Caco-2 (cell line): ENCODE measurements at regions of chr6 and their contacts with region 1.

Region 1: DNA sequence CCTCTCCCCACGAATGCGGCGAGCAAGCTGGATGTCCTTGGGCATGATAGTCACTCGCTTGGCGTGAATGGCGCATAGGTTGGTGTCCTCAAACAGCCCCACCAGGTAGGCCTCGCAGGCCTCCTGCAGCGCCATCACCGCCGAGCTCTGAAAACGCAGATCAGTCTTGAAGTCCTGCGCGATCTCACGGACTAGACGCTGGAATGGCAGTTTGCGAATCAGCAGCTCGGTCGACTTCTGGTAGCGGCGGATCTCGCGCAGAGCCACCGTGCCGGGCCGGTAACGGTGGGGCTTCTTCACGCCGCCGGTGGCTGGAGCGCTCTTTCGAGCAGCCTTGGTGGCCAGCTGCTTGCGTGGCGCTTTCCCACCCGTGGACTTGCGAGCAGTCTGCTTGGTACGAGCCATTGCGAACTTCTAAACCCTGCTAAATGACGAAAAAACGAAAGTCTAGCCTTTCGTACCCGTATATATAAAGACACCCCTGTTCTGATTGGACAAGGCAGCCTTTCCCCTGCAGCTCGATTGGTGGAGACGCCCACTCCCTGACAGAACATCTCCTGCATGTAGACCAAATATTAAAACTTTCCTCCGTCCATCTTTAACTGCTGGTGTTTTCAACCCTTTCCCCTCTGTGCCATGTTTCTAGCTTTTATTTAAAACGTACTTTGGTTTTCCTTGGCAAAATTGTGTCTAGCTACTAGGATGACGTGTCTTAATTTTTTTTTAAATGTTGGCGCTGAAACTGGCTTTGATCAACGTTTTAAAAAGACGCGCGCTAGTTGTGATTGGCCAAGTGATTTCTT is 109.8 kb downstream of the HFE start:
- DNase-seq: peak; percentile 89 to 92
- H3K4me3 ChIP-seq: peak overlapping the region; percentile 63
- H3K4me3 Mint-ChIP-seq: peak overlapping the region; percentile 87
- H3K27ac Mint-ChIP-seq: peak overlapping the region; percentile 99
- H3K4me1 ChIP-seq: peaks cover 4% of the 10 kb centered on the region; the same call in 1 of the 2 replicates
- H3K4me1 Mint-ChIP-seq: peaks cover 27% of the 10 kb centered on the region
- H3K27me3 ChIP-seq: no peaks in the 10 kb centered on the region
- H3K27me3 Mint-ChIP-seq: peaks cover 3% of the 10 kb centered on the region
- CTCF ChIP-seq: no peak

Region 2: GRCh38 chr6:26025894-26026832 is 170.9 kb before region 1 on chr6:
- CTCF ChIA-PET with region 1: interaction called, 3 read pairs
- POLR2A ChIA-PET with region 1: interaction called, 15 read pairs
- intact Hi-C with region 1: loop called (anchors 5 kb)
- DNase-seq: peak; percentile 94 to 95
- H3K4me3 ChIP-seq: peak overlapping the region; percentile 74
- H3K4me3 Mint-ChIP-seq: peak overlapping the region; percentile 85
- H3K27ac Mint-ChIP-seq: peak overlapping the region; percentile 100
- H3K4me1 ChIP-seq: peaks cover 18% of the 10 kb centered on the region; the same call in 1 of the 2 replicates
- H3K4me1 Mint-ChIP-seq: peaks cover 35% of the 10 kb centered on the region
- H3K27me3 ChIP-seq: no peaks in the 10 kb centered on the region
- H3K27me3 Mint-ChIP-seq: peaks cover 4% of the 10 kb centered on the region
- CTCF ChIP-seq: peak; percentile 81 to 87

Region 3: GRCh38 chr6:26103770-26104456 is 93.1 kb before region 1 on chr6:
- CTCF ChIA-PET with region 1: no interaction called
- POLR2A ChIA-PET with region 1: interaction called, 10 read pairs
- intact Hi-C with region 1: no loop called
- DNase-seq: peak; percentile 91 to 92
- H3K4me3 ChIP-seq: peak overlapping the region; percentile 32
- H3K4me3 Mint-ChIP-seq: peak overlapping the region; percentile 80
- H3K27ac Mint-ChIP-seq: peak overlapping the region; percentile 98
- H3K4me1 ChIP-seq: peaks cover 18% of the 10 kb centered on the region
- H3K4me1 Mint-ChIP-seq: peaks cover 14% of the 10 kb centered on the region
- H3K27me3 ChIP-seq: no peaks in the 10 kb centered on the region
- H3K27me3 Mint-ChIP-seq: peaks cover 5% of the 10 kb centered on the region
- CTCF ChIP-seq: peak; percentile 21 to 27

Region 4: GRCh38 chr6:26183581-26184366 is 13.3 kb before region 1 on chr6:
- CTCF ChIA-PET with region 1: no interaction called
- POLR2A ChIA-PET with region 1: interaction called, 51 read pairs
- intact Hi-C with region 1: no loop called
- DNase-seq: peak; percentile 61 to 63
- H3K4me3 ChIP-seq: peak overlapping the region; percentile 41
- H3K4me3 Mint-ChIP-seq: peak overlapping the region; percentile 52
- H3K27ac Mint-ChIP-seq: peak overlapping the region; percentile 88
- H3K4me1 ChIP-seq: peaks cover 3% of the 10 kb centered on the region; the same call in 1 of the 2 replicates
- H3K4me1 Mint-ChIP-seq: peaks cover 25% of the 10 kb centered on the region
- H3K27me3 ChIP-seq: no peaks in the 10 kb centered on the region
- H3K27me3 Mint-ChIP-seq: no peaks in the 10 kb centered on the region
- CTCF ChIP-seq: no peak

Region 5: GRCh38 chr6:26246057-26246456 is 49.0 kb after region 1 on chr6:
- CTCF ChIA-PET with region 1: no interaction called
- POLR2A ChIA-PET with region 1: no interaction called
- intact Hi-C with region 1: no loop called
- DNase-seq: no peak
- H3K4me3 ChIP-seq: no peak overlapping the region
- H3K4me3 Mint-ChIP-seq: no peak overlapping the region
- H3K27ac Mint-ChIP-seq: no peak overlapping the region
- H3K4me1 ChIP-seq: peaks cover 24% of the 10 kb centered on the region
- H3K4me1 Mint-ChIP-seq: peaks cover 23% of the 10 kb centered on the region
- H3K27me3 ChIP-seq: no peaks in the 10 kb centered on the region
- H3K27me3 Mint-ChIP-seq: no peaks in the 10 kb centered on the region
- CTCF ChIP-seq: no peak

Region 6: GRCh38 chr6:26270903-26271667 is 74.0 kb after region 1 on chr6:
- CTCF ChIA-PET with region 1: interaction called, 3 read pairs
- POLR2A ChIA-PET with region 1: interaction called, 77 read pairs
- intact Hi-C with region 1: loop called (anchors 5 kb)
- DNase-seq: peak; percentile 86 to 88
- H3K4me3 ChIP-seq: peak overlapping the region; percentile 50
- H3K4me3 Mint-ChIP-seq: no peak overlapping the region
- H3K27ac Mint-ChIP-seq: no peak overlapping the region
- H3K4me1 ChIP-seq: peaks cover 19% of the 10 kb centered on the region
- H3K4me1 Mint-ChIP-seq: peaks cover 19% of the 10 kb centered on the region
- H3K27me3 ChIP-seq: no peaks in the 10 kb centered on the region
- H3K27me3 Mint-ChIP-seq: no peaks in the 10 kb centered on the region
- CTCF ChIP-seq: no peak

Region 7: DNA sequence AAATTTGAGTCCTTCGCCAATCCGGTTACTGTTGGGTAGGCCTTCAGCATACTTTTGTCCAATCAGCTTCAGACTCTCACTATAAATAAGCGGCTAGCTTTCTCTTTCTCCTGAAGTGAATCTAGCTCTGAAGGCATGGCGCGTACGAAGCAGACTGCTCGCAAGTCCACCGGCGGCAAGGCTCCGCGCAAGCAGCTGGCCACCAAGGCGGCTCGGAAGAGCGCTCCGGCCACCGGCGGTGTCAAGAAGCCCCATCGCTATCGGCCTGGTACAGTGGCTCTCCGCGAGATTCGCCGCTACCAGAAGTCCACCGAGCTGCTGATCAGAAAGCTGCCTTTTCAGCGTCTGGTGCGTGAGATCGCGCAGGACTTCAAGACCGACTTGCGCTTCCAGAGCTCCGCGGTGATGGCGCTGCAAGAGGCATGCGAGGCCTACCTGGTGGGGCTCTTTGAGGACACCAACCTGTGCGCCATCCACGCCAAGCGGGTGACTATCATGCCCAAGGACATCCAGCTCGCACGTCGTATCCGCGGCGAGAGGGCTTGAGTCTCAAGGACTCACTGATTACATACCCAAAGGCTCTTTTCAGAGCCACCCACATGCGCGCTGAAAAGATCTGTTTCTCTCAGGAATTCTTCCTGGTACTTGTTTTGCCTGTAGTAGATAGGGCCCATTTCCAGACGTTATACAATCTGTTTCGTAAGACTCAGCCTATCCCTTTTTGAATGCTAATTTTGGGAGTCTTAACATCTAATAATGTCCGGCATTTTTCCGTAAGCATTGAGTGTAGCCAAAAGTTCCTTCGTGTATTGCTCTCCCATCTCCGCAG is 1613.1 kb after region 1 on chr6:
- CTCF ChIA-PET with region 1: no interaction called
- POLR2A ChIA-PET with region 1: interaction called, 10 read pairs
- intact Hi-C with region 1: loop called (anchors 5 kb)
- DNase-seq: peak; percentile 87 to 91
- H3K4me3 ChIP-seq: peak overlapping the region; percentile 78
- H3K4me3 Mint-ChIP-seq: peak overlapping the region; percentile 87
- H3K27ac Mint-ChIP-seq: peak overlapping the region; percentile 97
- H3K4me1 ChIP-seq: peaks cover 28% of the 10 kb centered on the region
- H3K4me1 Mint-ChIP-seq: peaks cover 32% of the 10 kb centered on the region
- H3K27me3 ChIP-seq: no peaks in the 10 kb centered on the region
- H3K27me3 Mint-ChIP-seq: no peaks in the 10 kb centered on the region
- CTCF ChIP-seq: no peak